Psoas muscle (tissue), 8 donors: ENCODE measurements at regions of chr13 and their contacts with region 1.

Region 1: DNA sequence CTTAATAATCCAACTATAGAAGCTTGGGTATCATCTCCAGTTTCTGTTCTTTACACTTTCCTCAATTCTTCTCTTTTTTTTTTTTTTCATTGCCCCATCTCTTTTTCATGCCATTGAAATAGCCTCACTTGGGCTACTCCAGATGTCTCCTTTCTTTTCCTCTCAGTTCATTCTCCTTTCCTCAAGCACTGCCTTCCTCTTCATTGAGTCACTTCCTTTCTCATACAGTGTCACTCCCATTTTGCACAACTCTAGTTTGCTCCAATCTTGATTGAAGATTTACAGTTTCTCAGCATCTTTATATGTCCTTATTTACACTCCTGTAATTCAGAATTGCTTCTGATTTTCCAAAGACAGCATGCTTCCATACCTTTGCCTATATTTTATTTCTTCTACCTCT is 61.3 kb downstream of the IPO5 start:
- DNase-seq: no peak
- ATAC-seq: no peak
- H3K4me3 ChIP-seq: no peak overlapping the region
- H3K27ac ChIP-seq: no peak overlapping the region
- H3K4me1 ChIP-seq: no peaks in the 10 kb centered on the region
- H3K27me3 ChIP-seq: no peaks in the 10 kb centered on the region
- CTCF ChIP-seq: no peak

Region 2: DNA sequence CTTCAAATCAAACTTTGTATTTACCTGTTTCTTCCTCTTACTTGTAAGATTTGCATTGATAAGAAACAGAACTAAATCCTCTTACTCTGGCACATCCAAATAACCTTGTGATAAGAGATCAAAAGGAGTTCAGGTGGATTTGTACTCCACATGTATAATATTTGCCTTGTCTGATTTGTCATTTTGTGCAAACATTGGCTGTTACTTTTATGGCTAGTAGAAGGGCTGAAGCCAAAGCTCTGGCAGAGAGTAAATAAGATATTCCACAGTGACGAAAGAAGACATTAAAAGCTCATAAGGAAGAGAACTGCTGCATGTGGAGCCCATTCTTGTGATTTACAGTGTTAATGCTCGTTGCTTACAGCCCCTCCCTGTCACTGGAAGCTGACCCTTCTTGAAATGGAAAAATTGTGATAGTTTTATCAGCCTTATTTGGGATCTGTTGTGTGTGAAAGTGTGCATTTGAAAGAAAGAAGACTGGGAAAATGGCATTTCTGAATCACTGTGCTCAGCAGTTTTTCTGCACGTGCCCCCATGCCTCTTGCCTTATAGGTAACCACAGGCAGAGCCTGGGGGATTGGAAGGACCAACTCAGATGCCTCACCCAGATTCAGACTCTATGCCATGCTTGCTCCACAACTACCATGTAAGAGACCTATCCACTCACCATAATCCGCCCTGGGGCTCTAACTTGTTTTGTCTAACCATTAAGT is 1088.7 kb before region 1 on chr13:
- intact Hi-C with region 1: no loop called
- DNase-seq: no peak
- ATAC-seq: no peak
- H3K4me3 ChIP-seq: no peak overlapping the region
- H3K27ac ChIP-seq: no peak overlapping the region
- H3K4me1 ChIP-seq: no peaks in the 10 kb centered on the region
- H3K27me3 ChIP-seq: no peaks in the 10 kb centered on the region
- CTCF ChIP-seq: no peak

Region 3: DNA sequence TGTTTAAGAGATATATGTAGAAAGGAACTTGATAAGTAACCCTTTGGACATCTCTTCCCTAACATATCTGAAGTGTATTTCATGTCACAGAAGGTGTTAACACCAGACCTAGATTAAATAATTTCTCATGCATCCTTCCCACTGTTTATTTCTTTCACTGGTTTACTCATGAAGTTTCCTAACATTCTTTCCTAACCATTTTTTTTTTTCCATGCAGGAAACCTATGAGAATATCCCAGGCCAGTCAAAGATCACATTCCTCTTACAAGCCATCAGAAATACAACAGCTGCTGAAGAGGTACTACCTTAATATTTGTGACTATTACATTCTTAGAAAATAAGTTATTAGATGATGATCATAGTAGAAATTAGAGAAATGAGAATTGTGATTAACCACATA is 32.5 kb before region 1 on chr13:
- intact Hi-C with region 1: loop called in 1 of 2 experiments (anchors 5 kb)
- DNase-seq: no peak
- ATAC-seq: no peak
- H3K4me3 ChIP-seq: no peak overlapping the region
- H3K27ac ChIP-seq: no peak overlapping the region
- H3K4me1 ChIP-seq: peaks cover 35% of the 10 kb centered on the region
- H3K27me3 ChIP-seq: no peaks in the 10 kb centered on the region
- CTCF ChIP-seq: no peak

Region 4: GRCh38 chr13:98083507-98083906 is 68.7 kb after region 1 on chr13:
- intact Hi-C with region 1: no loop called
- DNase-seq: no peak
- ATAC-seq: no peak
- H3K4me3 ChIP-seq: no peak overlapping the region
- H3K27ac ChIP-seq: no peak overlapping the region
- H3K4me1 ChIP-seq: no peaks in the 10 kb centered on the region
- H3K27me3 ChIP-seq: no peaks in the 10 kb centered on the region
- CTCF ChIP-seq: no peak

Region 5: DNA sequence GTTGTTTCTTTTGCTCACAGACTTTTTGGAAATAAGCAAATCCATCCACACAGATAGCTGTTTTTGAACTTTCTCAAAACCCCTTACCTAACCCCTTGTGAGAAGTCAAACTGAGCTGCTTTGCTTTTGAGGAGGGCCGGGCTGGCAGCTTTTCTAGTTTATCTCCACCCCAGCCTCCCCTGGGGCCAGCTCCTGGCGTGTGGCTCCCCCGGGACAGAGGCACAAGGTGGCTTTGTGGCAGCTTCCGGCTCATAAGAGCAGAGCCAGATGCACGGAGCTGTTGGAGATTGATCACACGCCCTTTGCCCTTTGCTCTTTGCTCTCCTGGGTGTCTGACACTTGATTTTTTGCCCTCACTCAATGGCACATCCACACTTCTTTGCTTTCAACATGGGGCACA is 187.2 kb after region 1 on chr13:
- intact Hi-C with region 1: no loop called
- DNase-seq: no peak
- ATAC-seq: no peak
- H3K4me3 ChIP-seq: no peak overlapping the region
- H3K27ac ChIP-seq: no peak overlapping the region
- H3K4me1 ChIP-seq: no peaks in the 10 kb centered on the region
- H3K27me3 ChIP-seq: peaks cover 0 to 2% (median 0%) of the 10 kb centered on the region in 3 donors
- CTCF ChIP-seq: no peak

Region 6: DNA sequence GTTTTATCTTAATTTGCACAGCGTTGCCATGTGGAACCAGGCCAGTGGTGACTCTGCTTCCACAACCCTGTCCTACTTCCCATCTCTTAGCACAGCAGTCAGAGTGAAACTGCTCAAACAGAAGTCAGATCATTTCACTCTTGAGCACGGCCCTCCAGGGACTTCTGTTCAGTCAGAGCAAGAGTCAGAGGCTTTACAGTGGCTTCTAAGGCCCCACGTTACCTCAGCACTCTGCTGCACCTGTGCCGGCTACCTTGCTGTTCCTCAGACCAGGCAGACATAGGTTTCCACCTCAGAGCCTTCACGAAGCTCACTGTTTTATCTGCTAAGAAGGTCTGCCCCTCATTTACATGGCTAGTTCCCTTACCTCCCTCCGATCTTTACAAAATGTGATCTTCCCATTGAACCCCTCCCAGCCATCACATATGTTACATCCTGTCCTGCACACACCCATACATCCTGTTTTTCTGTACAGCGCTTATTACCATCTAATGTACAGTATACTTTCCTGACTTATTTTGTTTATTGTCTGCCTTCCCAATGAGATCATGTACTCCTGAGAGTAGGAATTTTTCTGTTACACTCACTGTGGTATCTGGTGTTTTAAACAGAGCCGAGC is 1528.1 kb after region 1 on chr13:
- intact Hi-C with region 1: loop called in 1 of 2 experiments (anchors 10 kb)
- DNase-seq: no peak
- ATAC-seq: no peak
- H3K4me3 ChIP-seq: no peak overlapping the region
- H3K27ac ChIP-seq: no peak overlapping the region
- H3K4me1 ChIP-seq: no peaks in the 10 kb centered on the region
- H3K27me3 ChIP-seq: no peaks in the 10 kb centered on the region
- CTCF ChIP-seq: no peak